Calu3 (cell line): ENCODE measurements at regions of chr2 and their contacts with region 1.

Region 1: GRCh38 chr2:30711646-30712085 is 95.6 kb downstream of the CAPN13 start:
- DNase-seq: peak; percentile 90
- H3K4me3 Mint-ChIP-seq: no peak overlapping the region
- H3K27ac Mint-ChIP-seq: no peak overlapping the region
- H3K4me1 Mint-ChIP-seq: no peaks in the 10 kb centered on the region
- H3K27me3 Mint-ChIP-seq: no peaks in the 10 kb centered on the region
- CTCF ChIP-seq: peak; percentile 98

Region 2: GRCh38 chr2:30208452-30208851 is 503.2 kb before region 1 on chr2:
- CTCF ChIA-PET with region 1: interaction called, 31 read pairs
- intact Hi-C with region 1: loop called (anchors 1 kb)
- DNase-seq: peak; percentile 56
- H3K4me3 Mint-ChIP-seq: no peak overlapping the region
- H3K27ac Mint-ChIP-seq: no peak overlapping the region
- H3K4me1 Mint-ChIP-seq: no peaks in the 10 kb centered on the region
- H3K27me3 Mint-ChIP-seq: peaks cover 41% of the 10 kb centered on the region
- CTCF ChIP-seq: peak; percentile 74

Region 3: DNA sequence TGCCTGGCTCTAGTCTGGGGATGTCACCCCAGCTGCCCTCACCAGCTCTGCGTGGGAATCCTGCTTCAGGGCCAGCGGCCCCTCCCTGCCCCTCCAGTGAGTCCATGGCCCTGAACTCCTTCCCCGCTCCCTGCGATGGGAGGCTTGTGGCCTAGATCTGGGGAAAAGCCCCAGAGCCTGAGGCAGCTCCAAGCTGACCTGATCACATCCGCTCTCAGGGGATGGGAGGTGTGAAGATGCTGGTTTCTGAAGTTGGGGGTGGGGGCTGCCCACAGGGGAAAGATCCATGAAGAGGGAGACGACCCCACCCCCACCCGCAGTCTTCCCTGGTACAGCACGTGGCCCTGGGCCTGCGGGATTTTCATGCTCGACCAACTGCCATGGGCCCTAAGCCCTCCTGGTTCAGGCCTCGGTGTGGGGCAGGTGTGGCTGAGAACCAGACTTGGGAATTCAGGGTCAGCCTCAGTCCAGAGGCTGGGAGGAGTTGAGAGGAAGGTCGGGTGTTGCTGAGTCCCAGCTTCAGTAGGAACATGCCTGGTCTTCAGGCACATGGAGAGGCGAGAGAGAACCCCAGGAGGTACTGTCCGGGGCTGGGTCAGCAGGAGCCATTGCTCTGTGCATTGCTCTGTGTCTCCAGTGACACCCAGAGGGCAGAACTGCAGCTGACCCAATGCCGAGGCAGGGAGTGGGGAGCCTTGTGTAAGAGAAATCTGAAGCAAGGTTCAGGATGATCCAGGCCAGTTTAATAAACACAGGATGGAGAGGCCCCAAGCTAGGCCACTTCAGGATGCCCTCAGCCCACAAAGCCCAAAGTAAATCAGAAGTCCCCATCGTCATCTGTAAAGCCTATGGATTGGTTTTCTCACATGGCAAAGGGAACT is 19.5 kb before region 1 on chr2:
- CTCF ChIA-PET with region 1: interaction called, 13 read pairs
- intact Hi-C with region 1: no loop called
- DNase-seq: no peak
- H3K4me3 Mint-ChIP-seq: no peak overlapping the region
- H3K27ac Mint-ChIP-seq: no peak overlapping the region
- H3K4me1 Mint-ChIP-seq: no peaks in the 10 kb centered on the region
- H3K27me3 Mint-ChIP-seq: peaks cover 39% of the 10 kb centered on the region
- CTCF ChIP-seq: no peak

Region 4: DNA sequence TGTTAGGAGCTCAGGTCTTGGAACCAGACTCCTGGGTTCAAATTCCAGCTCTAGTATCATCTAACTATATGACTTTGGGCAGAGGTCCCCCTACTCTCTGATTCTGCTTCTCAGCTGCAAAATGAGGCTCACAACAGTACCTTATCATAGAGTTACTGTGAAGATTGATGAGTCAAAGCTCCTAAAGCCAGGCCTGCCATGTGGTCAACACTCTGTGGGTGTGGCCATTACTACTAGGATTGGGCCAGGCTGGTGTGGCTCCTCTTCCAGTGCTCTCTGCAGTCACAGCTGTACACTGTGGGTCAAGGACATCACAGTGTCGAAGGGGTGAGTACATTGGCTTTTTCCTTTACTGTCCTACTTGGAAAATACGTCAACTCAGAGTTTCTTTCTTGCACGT is 73.0 kb after region 1 on chr2:
- CTCF ChIA-PET with region 1: no interaction called
- intact Hi-C with region 1: no loop called
- DNase-seq: no peak
- H3K4me3 Mint-ChIP-seq: no peak overlapping the region
- H3K27ac Mint-ChIP-seq: no peak overlapping the region
- H3K4me1 Mint-ChIP-seq: no peaks in the 10 kb centered on the region
- H3K27me3 Mint-ChIP-seq: no peaks in the 10 kb centered on the region
- CTCF ChIP-seq: no peak

Region 5: GRCh38 chr2:30862054-30862651 is 150.5 kb after region 1 on chr2:
- CTCF ChIA-PET with region 1: interaction called, 21 read pairs
- intact Hi-C with region 1: loop called (anchors 1 kb)
- DNase-seq: peak; percentile 74
- H3K4me3 Mint-ChIP-seq: no peak overlapping the region
- H3K27ac Mint-ChIP-seq: no peak overlapping the region
- H3K4me1 Mint-ChIP-seq: no peaks in the 10 kb centered on the region
- H3K27me3 Mint-ChIP-seq: peaks cover 20% of the 10 kb centered on the region
- CTCF ChIP-seq: peak; percentile 81

Region 6: DNA sequence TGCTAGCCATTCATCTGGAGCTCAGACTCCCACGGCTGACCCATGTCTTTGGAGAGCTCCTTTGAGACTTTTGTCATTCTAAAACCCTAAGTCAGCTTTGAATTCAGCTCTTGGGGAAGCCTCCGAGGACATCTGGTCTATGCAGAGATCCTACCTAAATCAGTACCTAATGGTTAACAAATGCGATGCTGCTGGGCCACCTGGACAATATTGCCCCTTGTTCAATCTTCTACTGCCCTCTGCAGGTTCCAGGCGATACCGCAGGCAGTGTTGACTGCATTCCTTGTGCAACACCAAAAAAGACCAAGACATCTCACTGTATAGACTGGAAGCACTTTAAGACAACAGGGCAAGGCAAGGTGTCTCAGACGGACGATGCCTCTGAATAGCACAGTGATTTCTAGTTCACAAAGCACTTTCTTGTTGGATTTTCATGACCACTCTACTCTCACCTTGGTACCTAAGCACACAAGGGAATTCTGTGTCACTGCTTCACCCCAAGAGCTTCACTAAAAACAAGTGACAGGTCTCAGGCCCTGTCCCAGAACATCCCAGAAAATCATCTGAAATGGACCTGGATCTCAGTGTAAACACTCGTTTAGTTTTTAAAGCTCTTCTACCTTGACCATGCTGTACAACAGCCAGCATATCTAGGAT is 622.0 kb after region 1 on chr2:
- CTCF ChIA-PET with region 1: no interaction called
- intact Hi-C with region 1: loop called (anchors 2 kb)
- DNase-seq: peak; percentile 86
- H3K4me3 Mint-ChIP-seq: no peak overlapping the region
- H3K27ac Mint-ChIP-seq: no peak overlapping the region
- H3K4me1 Mint-ChIP-seq: peaks cover 28% of the 10 kb centered on the region
- H3K27me3 Mint-ChIP-seq: no peaks in the 10 kb centered on the region
- CTCF ChIP-seq: peak; percentile 82

Region 7: GRCh38 chr2:31666878-31667277 is 955.2 kb after region 1 on chr2:
- CTCF ChIA-PET with region 1: no interaction called
- intact Hi-C with region 1: no loop called
- DNase-seq: no peak
- H3K4me3 Mint-ChIP-seq: no peak overlapping the region
- H3K27ac Mint-ChIP-seq: no peak overlapping the region
- H3K4me1 Mint-ChIP-seq: no peaks in the 10 kb centered on the region
- H3K27me3 Mint-ChIP-seq: no peaks in the 10 kb centered on the region
- CTCF ChIP-seq: no peak

Region 8: GRCh38 chr2:32534831-32535230 is 1823.2 kb after region 1 on chr2:
- CTCF ChIA-PET with region 1: no interaction called
- intact Hi-C with region 1: no loop called
- DNase-seq: no peak
- H3K4me3 Mint-ChIP-seq: no peak overlapping the region
- H3K27ac Mint-ChIP-seq: no peak overlapping the region
- H3K4me1 Mint-ChIP-seq: no peaks in the 10 kb centered on the region
- H3K27me3 Mint-ChIP-seq: no peaks in the 10 kb centered on the region
- CTCF ChIP-seq: no peak